Activated CD4-positive, alpha-beta memory T cell treated with anti-CD3 and anti-CD28 coated beads for 36 hours (primary cell): ENCODE measurements at regions of chr1 and their contacts with region 1.

Region 1: GRCh38 chr1:12067900-12068821 is 5.1 kb downstream of the TNFRSF8 start:
- DNase-seq: peak; percentile 89
- H3K4me3 Mint-ChIP-seq: peak overlapping the region; percentile 69
- H3K27ac Mint-ChIP-seq: peak overlapping the region; percentile 96
- H3K4me1 Mint-ChIP-seq: peaks cover 62% of the 10 kb centered on the region
- H3K27me3 Mint-ChIP-seq: peaks cover 32% of the 10 kb centered on the region

Region 2: GRCh38 chr1:11893907-11894251 is 174.3 kb before region 1 on chr1:
- CTCF ChIA-PET with region 1: no interaction called
- POLR2A ChIA-PET with region 1: no interaction called
- intact Hi-C with region 1: no loop called
- DNase-seq: peak; percentile 78
- H3K4me3 Mint-ChIP-seq: peak overlapping the region; percentile 41
- H3K27ac Mint-ChIP-seq: peak overlapping the region; percentile 33
- H3K4me1 Mint-ChIP-seq: no peaks in the 10 kb centered on the region
- H3K27me3 Mint-ChIP-seq: peaks cover 22% of the 10 kb centered on the region

Region 3: GRCh38 chr1:12019858-12020509 is 48.2 kb before region 1 on chr1:
- CTCF ChIA-PET with region 1: interaction called, 5 read pairs
- POLR2A ChIA-PET with region 1: interaction called, 9 read pairs
- intact Hi-C with region 1: loop called (anchors 1 kb)
- DNase-seq: peak; percentile 14
- H3K4me3 Mint-ChIP-seq: peak overlapping the region; percentile 80
- H3K27ac Mint-ChIP-seq: peak overlapping the region; percentile 72
- H3K4me1 Mint-ChIP-seq: peaks cover 9% of the 10 kb centered on the region
- H3K27me3 Mint-ChIP-seq: no peaks in the 10 kb centered on the region

Region 4: GRCh38 chr1:12040457-12041051 is 27.6 kb before region 1 on chr1:
- CTCF ChIA-PET with region 1: interaction called, 5 read pairs
- POLR2A ChIA-PET with region 1: interaction called, 45 read pairs
- intact Hi-C with region 1: loop called (anchors 1 kb)
- DNase-seq: peak; percentile 66
- H3K4me3 Mint-ChIP-seq: no peak overlapping the region
- H3K27ac Mint-ChIP-seq: peak overlapping the region; percentile 46
- H3K4me1 Mint-ChIP-seq: peaks cover 43% of the 10 kb centered on the region
- H3K27me3 Mint-ChIP-seq: peaks cover 3% of the 10 kb centered on the region

Region 5: DNA sequence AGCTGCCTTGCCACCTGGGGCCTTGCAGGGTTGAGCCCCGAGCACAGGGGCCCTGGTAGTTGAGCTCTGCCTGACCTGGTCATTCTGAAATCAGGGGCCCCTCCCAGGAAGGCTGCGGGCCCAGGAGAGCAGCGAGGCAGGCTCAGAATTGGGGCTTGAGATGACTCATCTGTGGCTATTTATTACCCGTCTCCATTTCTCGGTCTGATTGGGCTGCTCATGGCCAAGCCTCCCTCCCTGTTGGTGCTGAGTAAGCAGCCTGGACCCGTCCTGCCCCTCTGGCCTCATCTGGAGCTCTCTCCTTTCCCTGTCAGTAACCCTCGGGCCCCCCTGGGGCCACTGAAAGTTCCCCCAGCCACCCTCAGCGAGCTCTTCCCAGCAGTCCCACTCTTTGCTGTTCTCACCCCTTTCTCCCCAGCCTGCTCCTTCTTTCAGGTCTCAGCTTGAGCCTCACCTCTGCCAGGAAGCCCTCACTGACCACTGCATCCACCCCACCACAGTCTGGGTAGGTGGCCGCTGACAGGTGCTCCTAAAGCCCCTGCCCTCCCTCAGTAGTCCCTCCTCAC is 16.1 kb before region 1 on chr1:
- CTCF ChIA-PET with region 1: interaction called, 5 read pairs
- POLR2A ChIA-PET with region 1: interaction called, 45 read pairs
- intact Hi-C with region 1: loop called (anchors 1 kb)
- DNase-seq: peak; percentile 80
- H3K4me3 Mint-ChIP-seq: no peak overlapping the region
- H3K27ac Mint-ChIP-seq: peak overlapping the region; percentile 49
- H3K4me1 Mint-ChIP-seq: peaks cover 50% of the 10 kb centered on the region
- H3K27me3 Mint-ChIP-seq: peaks cover 8% of the 10 kb centered on the region

Region 6: GRCh38 chr1:12087797-12088314 is 19.7 kb after region 1 on chr1:
- CTCF ChIA-PET with region 1: no interaction called
- POLR2A ChIA-PET with region 1: interaction called, 5 read pairs
- intact Hi-C with region 1: loop called (anchors 1 kb)
- DNase-seq: peak; percentile 77
- H3K4me3 Mint-ChIP-seq: peak overlapping the region; percentile 43
- H3K27ac Mint-ChIP-seq: peak overlapping the region; percentile 90
- H3K4me1 Mint-ChIP-seq: peaks cover 46% of the 10 kb centered on the region
- H3K27me3 Mint-ChIP-seq: no peaks in the 10 kb centered on the region

Region 7: DNA sequence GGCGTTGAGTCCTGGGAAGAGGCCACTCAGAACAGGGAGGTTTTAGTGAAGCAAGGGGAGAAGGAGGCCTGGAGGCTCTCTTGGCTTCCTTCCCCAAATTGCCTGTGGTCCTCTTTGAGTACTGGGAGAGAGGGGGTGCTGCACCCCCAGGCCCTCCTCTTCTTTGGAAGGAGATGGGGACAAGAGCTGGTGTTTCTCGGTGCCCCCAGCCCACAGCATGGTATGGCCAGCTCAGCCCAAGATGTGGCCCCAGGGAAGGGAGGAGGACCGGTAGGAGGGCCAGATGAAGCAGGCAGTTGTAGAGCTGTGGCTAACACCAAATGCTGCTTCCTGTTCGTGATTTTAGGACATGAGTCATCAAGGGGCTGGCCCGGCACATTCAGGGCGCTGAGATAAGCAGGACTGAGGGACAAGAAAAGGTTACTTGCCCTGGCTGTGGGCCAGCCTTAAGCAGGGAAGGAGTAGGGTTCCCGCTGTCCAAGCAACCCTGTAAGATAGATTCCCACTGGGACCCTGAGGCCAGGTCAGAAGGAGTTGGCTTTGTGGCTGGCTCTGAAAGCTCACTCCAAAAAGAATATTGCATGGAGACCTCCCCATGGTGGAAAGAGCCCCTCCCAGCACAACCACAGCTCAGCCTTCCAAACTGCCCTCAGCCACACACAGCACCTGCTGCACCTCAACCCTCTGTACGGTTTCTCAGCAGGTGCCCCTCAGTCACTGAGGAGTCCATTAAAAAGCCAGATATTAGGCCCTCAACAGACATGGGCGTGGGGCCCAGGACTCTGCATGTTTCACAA is 93.7 kb after region 1 on chr1:
- CTCF ChIA-PET with region 1: no interaction called
- POLR2A ChIA-PET with region 1: no interaction called
- intact Hi-C with region 1: loop called (anchors 5 kb)
- DNase-seq: peak; percentile 92
- H3K4me3 Mint-ChIP-seq: no peak overlapping the region
- H3K27ac Mint-ChIP-seq: peak overlapping the region; percentile 90
- H3K4me1 Mint-ChIP-seq: peaks cover 80% of the 10 kb centered on the region
- H3K27me3 Mint-ChIP-seq: no peaks in the 10 kb centered on the region